ENCODE measurements at regions of chr3 and their contacts with region 1.

Region 1: GRCh38 chr3:63349583-63350521 is 71.7 kb downstream of the SYNPR start:
- DNase-seq: peak; percentile 71
- H3K4me3 ChIP-seq: no peak overlapping the region
- H3K27ac ChIP-seq: no peak overlapping the region
- H3K4me1 ChIP-seq: no peaks in the 10 kb centered on the region
- H3K27me3 ChIP-seq: no peaks in the 10 kb centered on the region
- CTCF ChIP-seq: peak; percentile 69

Region 2: DNA sequence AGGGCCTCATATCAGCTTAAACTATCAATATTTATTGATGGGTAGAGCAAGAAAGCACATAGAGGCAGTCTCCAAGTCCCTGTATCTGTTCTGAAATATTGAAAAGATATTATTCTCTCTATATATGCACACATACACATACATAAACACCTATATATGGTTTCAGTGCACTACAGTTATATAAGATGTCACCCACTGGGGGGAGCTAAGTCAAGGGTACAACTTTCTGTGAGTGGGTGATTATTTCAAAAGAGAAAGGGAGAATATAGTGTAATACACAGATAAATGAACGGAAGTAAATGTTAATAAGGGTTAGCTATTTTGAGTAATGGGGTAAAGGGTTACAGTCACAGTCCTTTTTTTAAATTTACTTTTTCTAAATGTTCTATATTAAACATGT is 311.4 kb after region 1 on chr3:
- intact Hi-C with region 1: loop called (anchors 5 kb)
- DNase-seq: no peak
- H3K4me3 ChIP-seq: no peak overlapping the region
- H3K27ac ChIP-seq: no peak overlapping the region
- H3K4me1 ChIP-seq: no peaks in the 10 kb centered on the region
- H3K27me3 ChIP-seq: no peaks in the 10 kb centered on the region
- CTCF ChIP-seq: no peak

Region 3: GRCh38 chr3:63818281-63819150 is 468.7 kb after region 1 on chr3:
- intact Hi-C with region 1: loop called (anchors 2 kb)
- DNase-seq: peak; percentile 73
- H3K4me3 ChIP-seq: no peak overlapping the region
- H3K27ac ChIP-seq: no peak overlapping the region
- H3K4me1 ChIP-seq: no peaks in the 10 kb centered on the region
- H3K27me3 ChIP-seq: no peaks in the 10 kb centered on the region
- CTCF ChIP-seq: peak; percentile 78

Region 4: GRCh38 chr3:64008017-64008971 is 658.4 kb after region 1 on chr3:
- intact Hi-C with region 1: loop called (anchors 10 kb)
- DNase-seq: no peak
- H3K4me3 ChIP-seq: no peak overlapping the region
- H3K27ac ChIP-seq: no peak overlapping the region
- H3K4me1 ChIP-seq: no peaks in the 10 kb centered on the region
- H3K27me3 ChIP-seq: no peaks in the 10 kb centered on the region
- CTCF ChIP-seq: no peak

Measured in colonic mucosa (tissue), 4 donors.